AG04450 (cell line): ENCODE measurements at regions of chr10 and their contacts with region 1.

Region 1: DNA sequence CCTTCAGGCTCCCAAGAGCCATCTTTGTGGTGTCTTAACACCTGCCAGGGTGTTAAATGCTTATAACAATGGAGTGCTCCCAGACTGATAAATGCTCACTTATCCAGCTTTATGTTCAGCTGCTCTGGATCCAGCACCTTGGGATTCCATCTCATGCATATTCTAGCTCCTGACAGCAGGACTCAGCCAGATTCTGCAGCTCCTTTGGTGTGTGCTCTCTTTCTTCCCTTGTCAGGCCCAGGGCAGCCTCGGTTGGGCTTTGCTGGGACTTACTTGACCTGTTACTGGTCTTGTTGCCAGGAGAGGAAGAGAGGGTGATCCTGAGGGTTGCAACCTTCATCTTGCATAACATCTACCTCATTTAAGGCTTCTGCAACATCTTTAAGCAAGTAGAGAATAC is 59.4 kb upstream of the CCNY start:
- DNase-seq: no peak
- H3K4me3 ChIP-seq: no peak overlapping the region
- H3K27ac ChIP-seq: no peak overlapping the region
- H3K27me3 ChIP-seq: no peaks in the 10 kb centered on the region
- CTCF ChIP-seq: no peak

Region 2: GRCh38 chr10:35035606-35036005 is 241.3 kb before region 1 on chr10:
- CTCF ChIA-PET with region 1: no interaction called
- POLR2A ChIA-PET with region 1: no interaction called
- DNase-seq: no peak
- H3K4me3 ChIP-seq: no peak overlapping the region
- H3K27ac ChIP-seq: no peak overlapping the region
- H3K27me3 ChIP-seq: no peaks in the 10 kb centered on the region
- CTCF ChIP-seq: no peak

Region 3: DNA sequence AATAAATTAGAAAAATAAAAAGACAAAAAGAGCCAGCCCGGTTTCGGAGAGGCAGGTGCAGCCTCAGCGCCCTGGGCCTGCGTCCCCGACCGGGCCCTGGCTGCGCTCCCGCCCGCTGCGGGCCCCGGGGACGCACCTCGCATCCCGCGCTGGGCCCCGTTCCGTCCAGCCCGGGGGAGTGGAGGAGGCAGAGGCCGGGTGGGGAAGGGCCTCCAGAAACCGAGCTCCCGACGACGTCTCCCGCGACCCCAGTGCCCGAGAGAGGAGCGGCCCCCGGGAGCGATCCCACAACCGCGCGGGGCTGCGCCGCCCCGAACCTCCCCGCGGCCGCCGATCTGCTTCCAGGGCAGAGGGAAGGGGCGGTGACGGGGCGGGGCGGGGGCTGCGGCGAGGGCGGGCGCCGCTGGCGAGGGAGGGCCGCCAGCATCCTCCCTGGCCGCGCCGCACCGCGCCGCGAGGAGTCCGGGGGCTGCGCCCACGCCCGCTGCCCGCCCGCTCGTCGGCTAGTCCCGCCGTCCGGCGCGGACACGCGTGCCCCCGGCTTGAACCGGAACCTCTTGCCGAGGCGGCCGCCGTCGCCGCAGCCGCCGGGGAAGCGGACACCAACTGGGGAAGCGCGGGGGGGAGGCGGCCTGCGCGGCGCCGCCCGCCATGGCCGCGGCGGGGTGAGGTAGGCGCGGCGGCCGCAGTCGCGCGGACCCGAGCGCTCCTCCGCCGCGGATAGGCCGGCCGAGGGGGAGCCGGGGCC is 59.4 kb after region 1 on chr10 and contains the start of gene CCNY:
- CTCF ChIA-PET with region 1: no interaction called
- POLR2A ChIA-PET with region 1: interaction called, 10 read pairs
- DNase-seq: no peak
- H3K4me3 ChIP-seq: peak within 1 kb of the TSS; percentile 78
- H3K27ac ChIP-seq: no peak within 1 kb of the TSS
- H3K27me3 ChIP-seq: no peaks in the 10 kb centered on the region
- CTCF ChIP-seq: no peak
- polyA plus RNA-seq, gene CCNY: 90.2 and 97.3 TPM in 2 replicates

Region 4: DNA sequence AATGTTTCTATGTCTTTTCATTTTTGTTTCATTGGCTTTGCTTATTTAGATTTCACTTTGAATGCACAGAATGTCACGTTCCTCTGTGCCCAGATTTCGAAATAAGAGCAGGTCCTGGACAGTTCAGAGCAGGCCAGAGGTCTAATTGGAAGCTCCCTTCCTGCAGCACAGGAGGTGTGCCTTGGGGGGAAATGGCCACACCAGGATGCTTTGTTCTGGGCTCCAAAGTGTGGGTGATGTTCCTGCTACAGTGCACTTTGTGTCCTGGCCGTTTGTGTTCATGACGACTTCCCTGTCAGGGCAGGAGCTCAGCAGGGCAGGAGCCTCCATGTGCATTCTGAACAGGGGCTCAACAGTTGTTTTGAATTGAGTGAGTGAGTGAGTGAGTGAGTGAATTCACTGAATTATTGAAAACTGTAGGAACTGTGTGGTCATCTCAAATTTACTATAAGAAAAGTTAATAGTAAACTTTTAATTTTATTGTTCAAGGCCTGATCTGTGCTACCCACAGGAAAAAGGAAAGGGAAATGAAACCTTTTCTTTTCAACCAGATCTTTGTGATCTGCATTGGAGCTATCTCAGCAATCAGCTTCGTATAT is 218.7 kb after region 1 on chr10:
- CTCF ChIA-PET with region 1: no interaction called
- POLR2A ChIA-PET with region 1: no interaction called
- DNase-seq: no peak
- H3K4me3 ChIP-seq: no peak overlapping the region
- H3K27ac ChIP-seq: no peak overlapping the region
- H3K27me3 ChIP-seq: no peaks in the 10 kb centered on the region
- CTCF ChIP-seq: no peak